Mucosa of descending colon (tissue), 3 donors: ENCODE measurements at regions of chr14 and their contacts with region 1.

Region 1: DNA sequence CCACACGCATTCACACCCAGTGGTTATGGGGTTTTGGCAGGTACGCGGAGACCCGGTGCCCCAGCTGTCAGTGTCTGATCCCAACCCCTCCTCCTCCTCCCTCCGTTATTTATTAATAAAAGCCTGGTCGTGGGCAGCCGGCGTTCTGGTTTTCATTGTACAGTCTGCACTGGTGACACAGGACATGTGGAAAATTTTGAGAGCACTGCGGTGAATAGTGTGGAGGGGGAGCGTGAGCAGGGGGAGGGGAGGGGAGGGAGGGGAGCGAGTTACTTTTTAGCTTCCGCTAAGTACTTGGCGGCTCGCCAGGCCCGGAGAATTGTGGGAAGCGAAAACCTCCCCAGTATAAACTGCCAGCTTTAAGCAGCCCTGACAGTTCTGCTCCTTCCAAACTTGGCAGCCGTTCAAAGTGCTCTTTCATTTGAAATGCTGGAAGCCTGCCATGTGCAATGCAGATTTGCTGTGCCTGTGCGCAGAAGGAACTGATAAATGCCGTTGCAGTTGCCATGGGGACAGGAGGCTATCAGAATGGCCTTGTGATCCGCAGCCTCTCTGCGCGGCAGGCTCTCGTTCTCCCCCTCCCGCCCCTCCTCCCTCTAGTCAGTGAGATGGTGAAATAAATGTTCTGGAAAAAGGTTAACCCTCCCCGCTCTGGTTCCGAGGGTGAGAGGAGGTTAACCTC is 11.7 kb upstream of the IRF2BPL start:
- DNase-seq: peak; percentile 99
- ATAC-seq: peak; percentile 90
- H3K4me3 ChIP-seq: no peak overlapping the region
- H3K4me1 ChIP-seq: peaks cover 55% of the 10 kb centered on the region
- CTCF ChIP-seq: no peak

Region 2: GRCh38 chr14:76742966-76743365 is 297.2 kb before region 1 on chr14:
- intact Hi-C with region 1: no loop called
- DNase-seq: no peak
- ATAC-seq: no peak
- H3K4me3 ChIP-seq: no peak overlapping the region
- H3K4me1 ChIP-seq: no peaks in the 10 kb centered on the region
- CTCF ChIP-seq: no peak

Region 3: GRCh38 chr14:76947078-76947837 is 92.9 kb before region 1 on chr14:
- intact Hi-C with region 1: loop called in 1 of 2 experiments (anchors 10 kb)
- DNase-seq: peak; percentile 88 to 91 (median 89)
- ATAC-seq: peak; percentile 89
- H3K4me3 ChIP-seq: no peak overlapping the region
- H3K4me1 ChIP-seq: peaks cover 13% of the 10 kb centered on the region
- CTCF ChIP-seq: peak; percentile 33